Ascending aorta (tissue), 2 donors: ENCODE measurements at regions of chr6 and their contacts with region 1.

Region 1: DNA sequence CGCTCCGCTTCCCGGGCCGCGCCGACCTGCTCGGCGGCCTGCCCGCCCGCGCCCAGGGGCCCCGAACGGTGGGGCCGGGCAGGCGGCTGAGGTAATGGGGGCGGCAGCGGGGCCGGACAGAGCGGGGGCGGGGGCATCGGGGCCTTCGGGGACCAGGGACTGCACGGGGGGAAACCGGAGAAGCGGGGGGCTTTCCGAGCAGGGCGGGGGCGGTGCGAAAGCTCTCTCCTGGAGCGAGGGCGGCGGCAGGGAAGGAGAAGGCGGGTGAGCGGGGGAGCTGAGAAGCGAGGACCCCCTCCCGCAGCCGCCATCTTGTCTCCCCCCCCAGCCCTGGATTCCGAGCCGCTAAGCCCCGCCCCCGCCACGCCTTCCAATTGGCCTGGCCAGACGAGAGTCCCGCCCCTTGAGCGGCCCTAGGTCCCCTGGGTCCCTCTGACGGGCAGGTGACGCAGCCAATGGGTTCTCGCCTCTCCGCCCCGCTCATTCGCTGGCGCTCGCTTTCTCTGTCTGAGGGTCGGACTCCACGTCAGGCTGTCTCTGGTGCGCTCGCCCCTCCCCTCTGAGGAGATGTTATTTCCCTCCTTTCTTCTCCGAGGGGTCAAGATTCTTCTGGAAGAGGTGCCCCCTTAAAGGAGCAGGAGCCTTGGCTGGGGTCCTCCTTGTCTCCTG is 470 bp downstream of the BRPF3 start:
- DNase-seq: peak; percentile 88 to 98
- H3K4me3 ChIP-seq: peak overlapping the region; percentile 86 to 94
- H3K27ac ChIP-seq: peak overlapping the region; percentile 94 to 95
- H3K4me1 ChIP-seq: peaks cover 3 to 13% of the 10 kb centered on the region in 2 donors
- H3K27me3 ChIP-seq: no peaks in the 10 kb centered on the region
- CTCF ChIP-seq: no peak

Region 2: DNA sequence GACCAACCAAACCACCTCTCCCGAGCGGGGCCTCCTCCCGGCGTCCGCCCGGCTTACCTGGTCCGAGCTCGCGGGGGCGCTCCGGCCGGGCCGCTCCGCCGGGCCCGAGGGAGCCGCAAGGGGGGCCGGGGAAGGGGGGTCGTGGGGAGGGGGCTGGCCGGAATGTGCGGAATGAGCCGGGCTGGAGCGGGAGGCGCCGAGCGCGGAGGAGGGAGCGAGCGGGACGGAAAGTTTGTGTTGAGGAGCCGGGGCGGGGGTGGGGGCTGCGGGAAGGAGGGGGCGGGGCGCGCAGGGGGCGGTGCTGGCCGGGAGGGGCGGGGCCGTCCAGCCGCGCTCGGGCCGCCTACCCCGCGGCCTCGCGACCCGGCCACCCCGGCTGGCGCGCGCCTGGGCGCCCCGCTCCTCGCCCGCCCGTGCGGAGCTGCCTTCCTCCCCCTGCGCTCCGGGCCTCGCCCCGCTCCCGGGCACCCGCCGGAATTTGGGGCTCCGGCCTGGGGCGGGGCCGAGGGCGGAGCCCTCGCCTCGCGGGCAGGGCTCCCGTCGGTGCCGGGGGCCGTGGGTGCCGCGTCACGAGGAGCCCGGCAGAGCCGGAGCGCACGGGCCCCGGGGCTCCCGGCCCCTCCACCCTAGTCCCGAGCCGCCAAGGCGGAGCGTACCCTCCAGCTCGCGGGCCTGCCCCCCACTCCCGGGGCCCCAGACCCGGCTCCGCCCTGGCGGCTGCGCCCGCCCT is 700.0 kb before region 1 on chr6 and contains the start of gene TEAD3:
- intact Hi-C with region 1: loop called (anchors 5 kb)
- DNase-seq: peak in 1 of 2 donors; percentile 80
- H3K4me3 ChIP-seq: peak within 1 kb of the TSS; percentile 96 to 98
- H3K27ac ChIP-seq: peak within 1 kb of the TSS; percentile 99 to 100
- H3K4me1 ChIP-seq: peaks cover 16 to 31% of the 10 kb centered on the region in 2 donors
- H3K27me3 ChIP-seq: no peaks in the 10 kb centered on the region
- CTCF ChIP-seq: peak in 2 of 3 experiments; percentile 18 to 37
- total RNA-seq, gene TEAD3: 19.8 TPM

Region 3: GRCh38 chr6:35688581-35689322 is 508.3 kb before region 1 on chr6 and contains the start of gene FKBP5:
- intact Hi-C with region 1: loop called (anchors 5 kb)
- DNase-seq: peak; percentile 85 to 98
- H3K4me3 ChIP-seq: peak within 1 kb of the TSS; percentile 98 to 99
- H3K27ac ChIP-seq: peak within 1 kb of the TSS; percentile 96 to 98
- H3K4me1 ChIP-seq: peaks cover 13 to 21% of the 10 kb centered on the region in 2 donors
- H3K27me3 ChIP-seq: no peaks in the 10 kb centered on the region
- CTCF ChIP-seq: no peak
- total RNA-seq, gene FKBP5: 112 TPM

Region 4: DNA sequence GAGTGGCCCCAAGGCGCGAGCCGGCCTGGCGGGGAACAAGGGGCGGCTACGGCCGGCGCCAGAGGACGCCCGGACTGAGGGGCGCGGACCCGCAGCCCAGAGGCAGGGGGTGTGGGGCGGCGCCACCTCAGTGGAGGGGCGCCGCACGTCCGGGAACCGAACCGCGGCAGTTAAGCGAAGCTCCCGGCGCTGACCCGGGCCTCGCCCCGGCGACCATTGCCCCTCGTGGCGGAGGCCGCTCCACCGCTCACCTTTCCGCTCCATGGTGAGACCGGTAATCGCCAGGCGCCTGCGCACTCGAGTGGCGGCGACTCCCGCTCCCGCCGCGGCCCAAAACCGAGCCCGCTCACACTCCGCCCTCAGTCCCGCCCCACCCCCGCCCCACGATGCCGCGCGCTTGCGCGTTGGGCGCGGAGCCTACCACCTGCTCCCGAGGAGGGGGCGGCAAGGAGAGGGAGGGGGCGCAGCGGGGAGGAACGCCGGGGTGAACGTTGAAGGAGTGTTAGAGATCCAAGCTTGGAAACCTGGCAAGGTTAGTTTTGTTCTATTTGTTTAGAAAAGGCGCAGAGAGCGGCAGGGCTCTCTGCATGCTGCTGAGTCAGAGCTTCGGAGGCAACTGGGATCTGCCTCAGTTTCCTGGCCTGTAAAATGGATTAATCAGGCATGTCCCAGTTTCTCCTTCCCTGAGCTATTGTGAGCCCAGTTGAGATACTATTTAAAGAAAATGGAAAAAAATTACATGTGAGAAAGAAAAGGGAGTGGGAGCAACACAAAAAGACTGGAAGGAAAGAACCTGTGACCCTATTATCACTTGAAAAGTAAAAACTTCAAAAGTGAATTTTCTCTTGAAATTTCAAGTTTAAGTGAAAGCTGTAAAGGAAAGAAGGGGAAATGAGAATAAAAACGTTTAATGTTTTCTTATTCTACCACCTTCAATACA is 276.0 kb before region 1 on chr6 and contains the start of gene SRPK1:
- intact Hi-C with region 1: loop called (anchors 5 kb)
- DNase-seq: peak; percentile 32 to 91
- H3K4me3 ChIP-seq: peak within 1 kb of the TSS; percentile 83 to 89
- H3K27ac ChIP-seq: peak within 1 kb of the TSS; percentile 70 to 80
- H3K4me1 ChIP-seq: peaks cover 0 to 2% of the 10 kb centered on the region in 2 donors
- H3K27me3 ChIP-seq: no peaks in the 10 kb centered on the region
- CTCF ChIP-seq: no peak
- total RNA-seq, gene SRPK1: 16.2 TPM

Region 5: DNA sequence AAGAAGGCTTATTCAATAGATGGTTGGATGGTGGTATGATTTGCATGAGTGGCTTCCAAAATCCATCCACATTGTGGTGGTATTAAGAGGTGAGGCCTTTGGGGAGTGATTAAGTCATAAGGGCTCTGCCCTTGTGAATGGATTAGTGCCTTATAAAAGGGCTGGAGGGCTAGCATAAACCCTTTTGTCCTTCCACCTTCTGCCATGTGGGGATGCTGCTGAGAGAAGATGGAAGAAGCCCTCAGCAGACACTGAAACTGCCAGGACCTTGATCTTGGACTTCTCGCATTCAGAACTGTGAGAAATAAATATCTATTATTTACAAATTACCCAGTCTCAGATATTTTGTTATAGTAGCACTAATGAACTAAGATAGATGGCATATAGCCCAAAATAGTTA is 248.3 kb before region 1 on chr6:
- intact Hi-C with region 1: no loop called
- DNase-seq: no peak
- H3K4me3 ChIP-seq: no peak overlapping the region
- H3K27ac ChIP-seq: no peak overlapping the region
- H3K4me1 ChIP-seq: no peaks in the 10 kb centered on the region
- H3K27me3 ChIP-seq: no peaks in the 10 kb centered on the region
- CTCF ChIP-seq: no peak

Region 6: GRCh38 chr6:36027501-36028087 is 169.4 kb before region 1 on chr6 and contains the start of gene MAPK14:
- intact Hi-C with region 1: loop called (anchors 1 kb)
- DNase-seq: peak; percentile 97 to 100
- H3K4me3 ChIP-seq: peak within 1 kb of the TSS; percentile 97 to 98
- H3K27ac ChIP-seq: peak within 1 kb of the TSS; percentile 85 to 94
- H3K4me1 ChIP-seq: peaks cover 0 to 35% of the 10 kb centered on the region in 2 donors
- H3K27me3 ChIP-seq: no peaks in the 10 kb centered on the region
- CTCF ChIP-seq: peak; percentile 93 to 97 (median 93)
- total RNA-seq, gene MAPK14: 37.3 TPM

Region 7: DNA sequence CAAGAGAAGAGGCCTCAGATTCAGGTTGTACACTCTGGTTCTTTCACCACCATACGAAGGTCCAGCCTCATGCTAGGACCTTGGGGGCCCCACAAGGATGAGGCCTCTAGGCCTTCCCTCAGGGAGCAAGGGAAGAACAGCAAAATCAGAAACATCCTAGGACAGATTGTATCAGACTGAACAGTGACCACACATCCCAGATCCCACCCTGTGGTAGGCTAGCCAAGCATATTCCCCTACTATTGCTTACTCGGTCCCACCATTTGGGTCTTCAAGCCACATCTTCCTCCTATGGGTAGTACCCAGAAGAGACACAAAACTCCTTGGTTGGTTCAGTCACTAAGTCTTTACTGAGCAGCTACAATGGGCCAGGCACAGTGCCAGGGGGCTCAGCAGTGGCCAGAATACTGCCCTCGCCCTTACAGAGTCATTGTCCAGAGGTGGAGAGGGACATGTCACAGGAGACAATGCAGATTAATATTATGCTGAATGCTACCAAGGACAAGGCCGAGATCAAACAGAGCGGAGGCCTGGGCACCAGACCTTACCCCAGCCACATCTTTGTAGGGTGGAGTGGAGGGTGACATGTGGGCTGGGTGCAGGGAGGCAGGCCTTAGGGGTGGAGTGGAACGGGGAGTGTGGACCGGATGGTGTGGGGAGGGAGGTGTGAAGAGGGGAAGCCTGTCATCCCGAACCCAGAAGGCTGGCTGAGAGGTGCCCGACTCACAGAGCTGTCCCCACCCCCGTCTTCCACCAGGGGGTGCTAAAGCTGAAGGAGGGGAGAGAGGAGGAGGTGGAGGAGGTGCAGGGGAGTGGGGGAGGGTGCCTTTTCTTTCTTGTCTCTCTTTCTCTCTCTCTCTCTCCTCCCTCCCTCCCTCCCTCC is 73.5 kb before region 1 on chr6:
- intact Hi-C with region 1: loop called (anchors 1 kb)
- DNase-seq: peak; percentile 50 to 90
- H3K4me3 ChIP-seq: no peak overlapping the region
- H3K27ac ChIP-seq: no peak overlapping the region
- H3K4me1 ChIP-seq: peaks cover 0 to 4% of the 10 kb centered on the region in 2 donors
- H3K27me3 ChIP-seq: no peaks in the 10 kb centered on the region
- CTCF ChIP-seq: peak; percentile 68 to 75 (median 72)

Region 8: GRCh38 chr6:36360241-36361054 is 163.4 kb after region 1 on chr6:
- intact Hi-C with region 1: loop called (anchors 5 kb)
- DNase-seq: peak in 1 of 2 donors; percentile 88
- H3K4me3 ChIP-seq: no peak overlapping the region
- H3K27ac ChIP-seq: peak overlapping the region; percentile 49 to 59
- H3K4me1 ChIP-seq: peaks cover 0 to 27% of the 10 kb centered on the region in 2 donors
- H3K27me3 ChIP-seq: no peaks in the 10 kb centered on the region
- CTCF ChIP-seq: peak; percentile 83 to 93 (median 91)